A673 (cell line): ENCODE measurements at regions of chr15 and their contacts with region 1.

Region 1: GRCh38 chr15:79853458-79854328 is 43.1 kb downstream of the MTHFS start:
- DNase-seq: peak; percentile 79
- H3K4me3 ChIP-seq: no peak overlapping the region
- H3K27ac ChIP-seq: no peak overlapping the region
- H3K4me1 ChIP-seq: no peaks in the 10 kb centered on the region
- H3K27me3 ChIP-seq: no peaks in the 10 kb centered on the region
- CTCF ChIP-seq: peak; percentile 94

Region 2: DNA sequence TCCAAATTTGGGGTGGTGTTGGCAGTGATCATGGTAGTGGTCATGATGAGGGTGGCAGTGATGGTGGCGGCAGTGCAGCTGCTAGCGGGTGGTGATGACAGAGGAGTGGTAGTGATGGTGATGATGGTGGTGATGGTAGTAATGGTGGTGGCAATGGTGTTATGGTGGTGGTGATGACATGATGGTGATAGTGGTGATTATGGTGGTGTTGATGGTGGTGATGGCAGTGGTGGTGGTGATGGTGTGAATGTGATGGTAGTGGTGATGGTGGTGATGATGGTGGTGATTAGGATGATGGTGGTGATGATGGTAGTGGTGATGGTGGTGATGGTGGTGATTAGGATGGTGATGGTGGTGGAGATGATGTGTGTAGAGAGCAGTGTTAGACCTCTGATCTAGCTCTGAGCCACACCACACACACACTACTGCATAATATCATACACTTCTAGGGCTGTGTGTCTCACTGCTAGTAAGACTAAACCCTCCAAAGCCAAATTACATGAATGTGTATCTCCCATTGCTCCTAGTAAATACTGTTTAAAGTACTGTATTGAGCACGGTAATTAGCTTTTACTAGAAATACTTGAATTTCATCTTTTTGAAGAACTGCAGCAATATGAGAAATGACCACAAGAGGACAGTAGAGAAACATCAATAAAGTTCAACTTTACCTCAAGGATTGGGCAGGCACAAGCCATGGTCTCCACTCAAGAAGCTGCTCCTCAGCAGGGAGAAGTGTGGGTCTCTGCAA is 514.0 kb before region 1 on chr15:
- CTCF ChIA-PET with region 1: interaction called, 18 read pairs
- POLR2A ChIA-PET with region 1: no interaction called
- intact Hi-C with region 1: loop called (anchors 2 kb)
- DNase-seq: peak; percentile 58
- H3K4me3 ChIP-seq: no peak overlapping the region
- H3K27ac ChIP-seq: no peak overlapping the region
- H3K4me1 ChIP-seq: no peaks in the 10 kb centered on the region
- H3K27me3 ChIP-seq: no peaks in the 10 kb centered on the region
- CTCF ChIP-seq: peak; percentile 77

Region 3: GRCh38 chr15:79380755-79381497 is 472.8 kb before region 1 on chr15:
- CTCF ChIA-PET with region 1: interaction called, 21 read pairs
- POLR2A ChIA-PET with region 1: no interaction called
- intact Hi-C with region 1: loop called (anchors 1 kb)
- DNase-seq: peak; percentile 79
- H3K4me3 ChIP-seq: no peak overlapping the region
- H3K27ac ChIP-seq: no peak overlapping the region
- H3K4me1 ChIP-seq: no peaks in the 10 kb centered on the region
- H3K27me3 ChIP-seq: no peaks in the 10 kb centered on the region
- CTCF ChIP-seq: peak; percentile 85

Region 4: GRCh38 chr15:79450648-79451047 is 403.0 kb before region 1 on chr15:
- CTCF ChIA-PET with region 1: no interaction called
- POLR2A ChIA-PET with region 1: no interaction called
- intact Hi-C with region 1: loop called (anchors 10 kb)
- DNase-seq: peak; percentile 36
- H3K4me3 ChIP-seq: no peak overlapping the region
- H3K27ac ChIP-seq: no peak overlapping the region
- H3K4me1 ChIP-seq: no peaks in the 10 kb centered on the region
- H3K27me3 ChIP-seq: peaks cover 3% of the 10 kb centered on the region
- CTCF ChIP-seq: peak; percentile 55